HEK293T (cell line): ENCODE measurements at regions of chr9 and their contacts with region 1.

Region 1: DNA sequence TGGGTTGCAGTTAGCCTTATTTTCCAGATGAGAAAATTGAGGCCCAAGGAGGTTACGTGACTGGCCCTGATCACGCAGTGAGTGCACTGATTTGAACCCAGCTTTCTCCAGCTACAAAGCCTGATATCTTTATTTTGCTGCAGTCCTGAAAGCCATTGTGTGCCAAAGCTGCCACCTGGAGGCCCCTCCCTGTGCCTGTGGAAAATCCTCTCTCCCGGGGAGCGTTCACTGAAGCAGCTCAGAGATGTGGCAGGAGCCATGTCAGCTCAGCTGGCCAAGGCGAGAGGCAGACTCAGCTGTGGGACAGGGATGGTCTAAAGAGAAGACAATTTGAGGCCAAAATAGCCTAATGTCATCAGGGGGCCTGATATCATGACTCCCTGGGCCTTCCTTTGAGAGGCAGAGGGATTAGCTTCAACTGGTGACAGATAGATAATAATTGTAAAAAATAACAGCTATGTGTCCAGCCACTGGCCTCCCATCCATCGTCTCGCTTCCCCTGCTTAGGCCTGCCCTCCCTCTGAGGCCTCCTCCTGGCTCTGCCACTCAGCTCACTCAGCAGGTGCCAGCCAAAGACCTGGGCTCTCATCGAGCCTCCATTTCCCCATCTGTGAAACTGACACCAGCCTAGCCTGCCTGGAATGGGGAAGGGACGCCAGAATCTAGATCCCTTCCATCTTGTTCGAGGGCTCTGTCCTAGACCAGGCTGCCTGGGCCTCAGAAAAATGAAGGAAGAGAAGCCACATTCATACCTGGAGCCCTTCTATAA is 74.3 kb upstream of the GGTA1 start:
- DNase-seq: no peak

Region 2: GRCh38 chr9:121550569-121551512 is 23.1 kb before region 1 on chr9:
- CTCF ChIA-PET with region 1: interaction called, 10 read pairs
- POLR2A ChIA-PET with region 1: no interaction called
- DNase-seq: peak; percentile 86